ENCODE measurements at regions of chr14 and their contacts with region 1.

Region 1: DNA sequence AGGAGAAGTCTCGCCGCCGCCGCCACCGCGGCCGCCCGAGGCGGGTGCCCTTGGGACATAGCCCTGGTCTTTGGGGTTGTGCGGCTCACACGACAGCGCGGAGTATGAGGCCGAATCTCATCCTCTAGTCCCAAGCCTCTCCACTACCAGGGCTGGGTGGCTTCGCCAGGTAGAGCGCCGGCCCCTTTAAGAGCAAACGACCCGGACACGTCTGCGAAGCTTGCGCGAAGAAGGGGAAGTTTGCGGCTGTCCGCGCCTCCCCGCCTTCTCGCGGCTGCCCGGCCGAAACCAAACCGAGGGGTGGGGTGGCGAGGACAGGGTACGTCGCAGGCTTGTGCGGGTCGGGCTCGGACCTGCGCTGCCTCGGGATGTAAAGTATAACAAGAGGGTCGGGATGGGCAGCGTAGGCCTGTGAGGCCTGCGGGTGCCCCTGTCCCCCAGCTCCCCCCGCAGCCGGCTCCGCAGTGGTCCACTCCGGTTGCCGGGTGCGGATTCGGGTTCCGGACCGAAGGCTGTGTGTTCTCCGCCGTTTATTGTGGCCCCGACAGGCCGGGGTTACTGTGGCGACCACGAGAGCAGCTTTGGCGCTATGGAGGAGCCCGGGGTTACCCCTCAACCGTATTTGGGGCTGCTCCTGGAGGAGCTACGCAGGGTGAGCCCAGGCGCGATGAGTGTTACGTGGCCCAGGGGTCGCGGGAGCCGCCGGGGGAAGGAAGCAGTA is 33.3 kb downstream of the MIA2 start:
- DNase-seq: peak; percentile 58 to 90
- ATAC-seq: peak; percentile 91 to 94
- H3K4me3 ChIP-seq: peak overlapping the region; percentile 72
- H3K27ac ChIP-seq: peak overlapping the region; percentile 97 to 98
- H3K4me1 ChIP-seq: peaks cover 29% of the 10 kb centered on the region
- CTCF ChIP-seq: no peak
- EP300 ChIP-seq: no peak
- POLR2A ChIP-seq: peak; percentile 44
- RAD21 ChIP-seq: peak in 1 of 2 experiments; percentile 24; a peak in 1 of 5 replicates

Region 2: GRCh38 chr14:38873941-38874612 is 393.0 kb before region 1 on chr14:
- CTCF ChIA-PET with region 1: no interaction called
- POLR2A ChIA-PET with region 1: no interaction called
- DNase-seq: no peak
- ATAC-seq: no peak
- H3K4me3 ChIP-seq: no peak overlapping the region
- H3K27ac ChIP-seq: no peak overlapping the region
- H3K4me1 ChIP-seq: no peaks in the 10 kb centered on the region
- CTCF ChIP-seq: no peak
- EP300 ChIP-seq: no peak
- POLR2A ChIP-seq: no peak
- RAD21 ChIP-seq: no peak

Region 3: GRCh38 chr14:39174560-39175444 is 92.2 kb before region 1 on chr14 and contains the start of gene PNN:
- CTCF ChIA-PET with region 1: no interaction called
- POLR2A ChIA-PET with region 1: interaction called, 89 read pairs
- DNase-seq: peak; percentile 96 to 100
- ATAC-seq: peak; percentile 95
- H3K4me3 ChIP-seq: peak within 1 kb of the TSS; percentile 82
- H3K27ac ChIP-seq: peak within 1 kb of the TSS; percentile 95
- H3K4me1 ChIP-seq: peaks cover 36% of the 10 kb centered on the region
- CTCF ChIP-seq: no peak
- EP300 ChIP-seq: no peak
- POLR2A ChIP-seq: peak; percentile 65
- RAD21 ChIP-seq: no peak
- polyA plus RNA-seq, gene PNN: 40.3 and 50.1 TPM in 2 replicates